Mammary epithelial cell (primary cell): ENCODE measurements at regions of chr5 and their contacts with region 1.

Region 1: DNA sequence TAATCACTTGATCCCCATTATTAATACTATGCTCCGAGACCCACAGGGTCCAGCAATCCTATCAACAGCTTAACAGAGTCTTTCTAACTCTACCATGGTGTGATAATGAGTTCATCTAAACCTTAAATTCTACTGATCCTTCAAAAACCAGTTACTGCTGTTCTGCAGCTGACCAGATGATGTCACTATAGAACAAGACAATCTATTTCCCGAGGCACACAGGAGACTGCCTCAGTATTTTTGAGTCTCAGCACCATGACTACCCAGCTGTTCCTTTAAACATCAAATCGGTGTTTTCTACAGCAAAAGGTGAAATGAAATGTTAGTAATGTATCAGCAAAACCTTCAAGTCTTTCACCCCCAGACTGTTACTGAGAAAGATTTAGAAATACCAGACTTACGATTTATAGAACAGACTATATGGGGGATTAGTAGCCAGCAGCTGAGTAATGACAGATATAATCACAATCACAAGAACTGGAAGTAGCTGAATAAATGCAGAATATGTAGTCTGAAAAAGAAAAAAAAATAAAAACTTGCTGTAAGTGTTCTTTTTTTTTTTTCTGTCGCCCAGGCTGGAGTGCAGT is 16.9 kb downstream of the DNAJC18 start:
- DNase-seq: peak; percentile 57
- H3K4me3 ChIP-seq: no peak overlapping the region
- H3K27ac ChIP-seq: no peak overlapping the region
- H3K4me1 ChIP-seq: peaks cover 7% of the 10 kb centered on the region
- H3K27me3 ChIP-seq: no peaks in the 10 kb centered on the region
- CTCF ChIP-seq: peak; percentile 89 to 98

Region 2: GRCh38 chr5:139482050-139482889 is 59.9 kb after region 1 on chr5 and contains the start of gene STING1:
- CTCF ChIA-PET with region 1: no interaction called
- dilution Hi-C with region 1: no loop called
- in situ Hi-C with region 1: no loop called
- intact Hi-C with region 1: loop called (anchors 2 kb)
- DNase-seq: peak; percentile 97
- H3K4me3 ChIP-seq: peak within 1 kb of the TSS; percentile 19 to 44 (median 37)
- H3K27ac ChIP-seq: peak within 1 kb of the TSS; percentile 58
- H3K4me1 ChIP-seq: peaks cover 22% of the 10 kb centered on the region
- H3K27me3 ChIP-seq: no peaks in the 10 kb centered on the region
- CTCF ChIP-seq: no peak
- total RNA-seq, gene STING1: 10.7 to 36.6 TPM

Region 3: DNA sequence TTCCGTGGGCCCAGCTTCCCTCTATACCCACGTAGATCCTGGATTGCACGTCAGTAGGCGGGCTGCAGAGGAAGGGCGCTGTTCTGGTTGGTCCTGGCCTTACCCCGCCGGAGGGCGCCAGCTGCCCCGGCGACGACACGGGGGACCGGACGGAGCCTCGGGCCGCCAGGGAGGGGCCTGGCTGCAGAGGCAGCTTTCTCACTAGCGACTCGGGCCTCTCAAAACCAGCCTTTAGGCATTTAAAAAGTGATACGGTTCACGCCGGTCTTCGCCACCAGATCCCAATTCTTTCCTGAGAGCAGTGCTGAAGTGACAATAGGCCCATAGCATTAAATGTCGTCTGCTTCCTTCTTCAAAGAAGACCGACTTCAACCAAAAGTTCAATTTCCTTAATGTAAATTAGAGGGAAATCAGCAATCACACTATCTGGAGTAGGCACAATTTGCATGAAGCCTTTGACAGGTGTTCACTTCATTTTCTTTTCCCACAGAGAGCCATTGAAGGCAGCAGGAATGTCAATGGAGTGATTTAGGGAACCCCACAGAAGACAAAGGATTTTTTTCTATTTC is 121.1 kb after region 1 on chr5:
- CTCF ChIA-PET with region 1: interaction called, 11 read pairs
- dilution Hi-C with region 1: no loop called
- in situ Hi-C with region 1: no loop called
- intact Hi-C with region 1: no loop called
- DNase-seq: no peak
- H3K4me3 ChIP-seq: no peak overlapping the region
- H3K27ac ChIP-seq: no peak overlapping the region
- H3K4me1 ChIP-seq: no peaks in the 10 kb centered on the region
- H3K27me3 ChIP-seq: no peaks in the 10 kb centered on the region
- CTCF ChIP-seq: no peak

Region 4: DNA sequence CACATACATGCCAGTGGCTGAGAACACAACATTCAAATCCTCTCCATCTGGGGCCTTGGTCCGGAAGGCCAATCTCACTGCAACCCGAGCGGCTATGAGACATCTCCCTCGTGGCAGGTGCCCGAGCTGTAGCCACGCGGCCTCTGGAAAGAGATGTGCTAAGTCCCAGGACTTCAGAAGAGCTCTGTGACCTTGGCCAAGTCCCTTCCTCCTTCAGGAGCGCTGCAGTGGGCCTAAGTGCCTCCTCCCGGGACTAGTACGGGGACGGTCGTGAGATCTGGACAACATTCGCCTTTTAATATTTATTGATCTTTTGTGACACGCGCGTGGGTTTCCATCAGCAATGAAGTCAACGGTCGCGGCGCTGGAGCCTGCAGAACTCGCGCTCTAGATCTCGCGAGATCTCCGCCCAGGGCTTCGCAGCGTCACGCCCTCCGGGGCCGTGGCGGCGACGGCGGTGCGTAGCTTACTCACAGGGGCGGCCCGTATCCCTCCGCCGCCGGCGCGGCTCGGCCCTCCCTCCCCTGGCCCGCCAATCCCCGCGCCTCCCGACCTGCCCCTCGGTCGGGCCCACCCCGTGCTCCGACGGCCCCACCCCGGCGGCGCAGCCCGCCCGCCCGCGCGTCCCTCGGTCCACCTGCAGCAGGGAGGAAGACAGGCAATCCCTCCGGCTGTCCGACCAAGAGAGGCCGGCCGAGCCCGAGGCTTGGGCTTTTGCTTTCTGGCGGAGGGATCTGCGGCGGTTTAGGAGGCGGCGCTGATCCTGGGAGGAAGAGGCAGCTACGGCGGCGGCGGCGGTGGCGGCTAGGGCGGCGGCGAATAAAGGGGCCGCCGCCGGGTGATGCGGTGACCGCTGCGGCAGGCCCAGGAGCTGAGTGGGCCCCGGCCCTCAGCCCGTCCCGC is 138.6 kb after region 1 on chr5 and contains the start of gene UBE2D2:
- CTCF ChIA-PET with region 1: interaction called, 6 read pairs
- dilution Hi-C with region 1: no loop called
- in situ Hi-C with region 1: no loop called
- intact Hi-C with region 1: loop called (anchors 2 kb)
- DNase-seq: peak; percentile 98
- H3K4me3 ChIP-seq: peak within 1 kb of the TSS; percentile 69 to 87 (median 75)
- H3K27ac ChIP-seq: peak within 1 kb of the TSS; percentile 65
- H3K4me1 ChIP-seq: peaks cover 7% of the 10 kb centered on the region
- H3K27me3 ChIP-seq: no peaks in the 10 kb centered on the region
- CTCF ChIP-seq: no peak
- total RNA-seq, gene UBE2D2: 47.0 to 141 TPM

Region 5: DNA sequence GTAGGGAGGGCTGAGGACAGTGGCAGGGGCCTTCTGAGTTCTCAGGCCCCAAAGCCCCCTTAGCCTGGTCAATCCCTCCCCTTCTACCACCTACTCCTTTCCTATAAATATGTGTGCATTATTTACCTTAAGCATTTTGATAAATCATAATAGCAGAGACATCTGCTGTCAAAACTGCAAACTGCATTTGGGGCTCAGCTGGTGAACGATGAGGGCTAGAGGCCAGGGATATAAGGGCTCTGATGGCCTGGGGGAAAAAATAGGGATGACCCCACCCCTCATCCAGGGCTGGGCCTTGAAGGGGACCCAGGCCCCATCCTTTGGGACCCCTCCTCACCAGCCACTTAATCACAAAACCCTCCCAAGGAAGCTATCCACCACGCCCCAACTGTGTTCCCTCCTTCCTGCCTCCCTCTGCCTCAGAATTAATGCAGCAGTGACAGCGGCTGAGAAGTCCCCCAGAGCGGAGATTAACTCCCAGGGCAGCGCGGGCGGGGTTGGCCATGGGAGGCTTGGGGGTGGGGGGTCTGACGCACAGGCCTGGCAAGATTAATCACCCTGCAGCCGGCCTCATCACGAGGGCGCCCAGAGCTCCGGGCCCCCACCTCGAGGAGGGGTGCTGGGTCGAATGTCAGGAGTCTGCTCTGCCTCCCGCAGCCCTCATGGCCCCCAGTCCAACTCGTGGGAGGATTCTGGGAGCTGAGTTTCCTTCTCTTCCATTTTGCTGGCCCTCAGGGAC is 267.8 kb after region 1 on chr5:
- CTCF ChIA-PET with region 1: no interaction called
- dilution Hi-C with region 1: no loop called
- in situ Hi-C with region 1: no loop called
- intact Hi-C with region 1: loop called (anchors 2 kb)
- DNase-seq: peak; percentile 28
- H3K4me3 ChIP-seq: no peak overlapping the region
- H3K27ac ChIP-seq: no peak overlapping the region
- H3K4me1 ChIP-seq: peaks cover under 1% of the 10 kb centered on the region
- H3K27me3 ChIP-seq: no peaks in the 10 kb centered on the region
- CTCF ChIP-seq: peak; percentile 59 to 64

Region 6: GRCh38 chr5:139765409-139766217 is 343.2 kb after region 1 on chr5:
- CTCF ChIA-PET with region 1: no interaction called
- dilution Hi-C with region 1: no loop called
- in situ Hi-C with region 1: loop called in 1 of 2 experiments (anchors 10 kb)
- intact Hi-C with region 1: loop called (anchors 5 kb)
- DNase-seq: peak; percentile 56
- H3K4me3 ChIP-seq: peak overlapping the region; percentile 53 to 76 (median 59)
- H3K27ac ChIP-seq: no peak overlapping the region
- H3K4me1 ChIP-seq: no peaks in the 10 kb centered on the region
- H3K27me3 ChIP-seq: no peaks in the 10 kb centered on the region
- CTCF ChIP-seq: peak; percentile 55 to 69